ENCODE measurements at regions of chr22 and their contacts with region 1.

Region 1: DNA sequence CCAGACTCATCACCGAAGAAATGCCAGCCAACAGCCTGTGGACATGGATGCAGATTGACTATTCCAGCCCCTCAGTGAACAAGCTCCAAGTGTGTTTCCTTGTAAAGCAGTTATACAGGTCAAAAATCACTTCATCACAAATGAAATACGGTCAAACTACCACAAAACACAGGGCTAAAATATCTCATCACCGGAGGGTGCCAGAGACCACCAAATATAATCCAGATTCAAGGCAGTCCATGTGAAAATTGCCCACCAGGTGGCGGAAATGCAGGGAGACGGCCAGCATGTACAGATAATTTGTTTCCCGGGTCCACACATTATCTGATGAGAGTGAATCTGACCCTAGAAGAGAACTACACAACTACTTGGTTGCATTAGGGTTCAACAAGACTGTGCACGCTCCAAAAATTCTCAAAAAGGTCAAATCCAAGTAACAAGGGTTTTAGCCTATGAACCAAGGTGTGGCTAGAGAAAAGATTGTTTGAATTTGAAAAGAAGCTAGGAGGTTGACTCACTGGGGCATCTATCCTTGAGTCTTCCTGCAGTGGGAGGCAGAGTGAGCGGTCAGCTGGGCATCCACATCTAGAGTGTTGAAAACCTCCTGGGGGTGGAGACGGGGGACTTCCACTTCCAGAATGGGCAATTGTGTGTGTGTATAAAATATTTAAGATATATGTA is 71.7 kb downstream of the IGLL5 start:
- DNase-seq: peak in 1 of 2 experiments; percentile 87
- H3K4me3 ChIP-seq: no peak overlapping the region
- H3K27ac ChIP-seq: no peak overlapping the region
- H3K4me1 ChIP-seq: 0 out of 7 replicates have a peak, but pooled peaks cover 0 to 4% (median under 1%) of the 10 kb centered on the region in 4 experiments
- H3K27me3 ChIP-seq: peaks cover 0 to 13% (median 2%) of the 10 kb centered on the region in 4 experiments; a peak in 2 of 7 replicates
- CTCF ChIP-seq: peak; percentile 68 to 100 (median 94)
- EP300 ChIP-seq: no peak
- POLR2A ChIP-seq: no peak
- RAD21 ChIP-seq: peak; percentile 99 to 100

Region 2: GRCh38 chr22:22463855-22464540 is 495.3 kb before region 1 on chr22:
- CTCF ChIA-PET with region 1: interaction called, 206 read pairs
- POLR2A ChIA-PET with region 1: no interaction called
- DNase-seq: peak in 1 of 2 experiments; percentile 79
- H3K4me3 ChIP-seq: peak overlapping the region in 1 of 4 experiments; percentile 37; a peak in 1 of 8 replicates
- H3K27ac ChIP-seq: no peak overlapping the region
- H3K4me1 ChIP-seq: peaks cover 0 to 18% (median 3%) of the 10 kb centered on the region in 4 experiments; a peak in 3 of 7 replicates
- H3K27me3 ChIP-seq: peaks cover 3 to 26% (median 18%) of the 10 kb centered on the region in 4 experiments; a peak in 5 of 7 replicates
- CTCF ChIP-seq: peak; percentile 15 to 85 (median 66)
- EP300 ChIP-seq: no peak
- POLR2A ChIP-seq: no peak
- RAD21 ChIP-seq: peak; percentile 91

Region 3: GRCh38 chr22:22907551-22908494 is 51.5 kb before region 1 on chr22:
- CTCF ChIA-PET with region 1: no interaction called
- POLR2A ChIA-PET with region 1: no interaction called
- DNase-seq: no peak
- H3K4me3 ChIP-seq: no peak overlapping the region
- H3K27ac ChIP-seq: no peak overlapping the region
- H3K4me1 ChIP-seq: no peaks in the 10 kb centered on the region
- H3K27me3 ChIP-seq: peaks cover 11 to 40% (median 24%) of the 10 kb centered on the region in 4 experiments; a peak in 5 of 7 replicates
- CTCF ChIP-seq: no peak
- EP300 ChIP-seq: no peak
- POLR2A ChIP-seq: no peak
- RAD21 ChIP-seq: no peak

Region 4: GRCh38 chr22:22976033-22976922 is 17.0 kb after region 1 on chr22:
- CTCF ChIA-PET with region 1: interaction called, 24 read pairs
- POLR2A ChIA-PET with region 1: no interaction called
- DNase-seq: no peak
- H3K4me3 ChIP-seq: no peak overlapping the region
- H3K27ac ChIP-seq: no peak overlapping the region
- H3K4me1 ChIP-seq: no peaks in the 10 kb centered on the region
- H3K27me3 ChIP-seq: peaks cover 0 to 3% (median 2%) of the 10 kb centered on the region in 4 experiments; a peak in 4 of 7 replicates
- CTCF ChIP-seq: peak in 1 of 3 experiments; percentile 18; a peak in 1 of 4 replicates
- EP300 ChIP-seq: no peak
- POLR2A ChIP-seq: no peak
- RAD21 ChIP-seq: no peak

Region 5: DNA sequence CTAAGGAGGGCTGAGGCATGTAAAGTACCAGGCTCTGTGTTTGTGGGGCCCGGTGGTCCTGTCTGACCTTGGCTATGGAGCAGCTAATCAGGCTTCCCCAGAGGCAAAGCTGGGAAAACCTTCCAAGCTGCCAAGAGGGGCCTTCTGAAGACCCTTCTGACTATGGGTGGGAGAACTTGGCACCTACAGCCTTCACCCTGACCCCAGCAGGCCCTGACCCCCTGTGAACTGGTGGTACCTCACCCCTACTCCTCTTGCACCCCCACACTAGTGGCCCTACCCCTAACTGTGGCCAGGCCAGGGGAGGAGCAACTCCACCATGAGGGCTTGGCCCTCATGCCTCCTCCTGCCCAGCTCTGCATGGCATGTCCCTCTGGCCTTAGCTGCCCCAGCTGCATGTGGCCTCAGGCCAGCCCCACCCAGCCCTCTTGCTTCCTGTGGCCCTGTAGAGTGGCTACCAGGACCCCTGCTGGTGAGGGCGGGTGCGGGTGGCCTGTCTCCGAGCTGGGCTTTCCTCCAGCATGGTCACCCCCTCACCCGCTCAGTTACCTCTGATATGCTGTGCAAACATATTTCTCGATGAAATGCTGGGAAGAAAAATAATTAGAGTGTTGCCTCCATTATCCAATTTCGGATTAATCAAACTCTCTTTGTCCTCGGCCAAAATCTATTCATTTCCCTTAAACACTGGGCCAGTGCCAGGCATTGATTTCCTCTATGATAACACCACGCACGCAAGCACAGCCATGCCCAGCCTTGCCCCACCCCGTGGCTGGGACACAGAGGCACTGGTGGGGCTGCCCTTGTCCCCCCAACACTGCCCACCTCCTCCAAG is 118.6 kb after region 1 on chr22:
- CTCF ChIA-PET with region 1: no interaction called
- POLR2A ChIA-PET with region 1: no interaction called
- DNase-seq: no peak
- H3K4me3 ChIP-seq: no peak overlapping the region
- H3K27ac ChIP-seq: no peak overlapping the region
- H3K4me1 ChIP-seq: no peaks in the 10 kb centered on the region; a peak in 1 of 7 replicates
- H3K27me3 ChIP-seq: peaks cover 0 to 2% (median 0%) of the 10 kb centered on the region in 4 experiments; a peak in 3 of 7 replicates
- CTCF ChIP-seq: no peak
- EP300 ChIP-seq: no peak
- POLR2A ChIP-seq: no peak
- RAD21 ChIP-seq: no peak

Region 6: GRCh38 chr22:23113067-23113846 is 154.0 kb after region 1 on chr22:
- CTCF ChIA-PET with region 1: interaction called, 384 read pairs
- POLR2A ChIA-PET with region 1: no interaction called
- DNase-seq: no peak
- H3K4me3 ChIP-seq: no peak overlapping the region
- H3K27ac ChIP-seq: no peak overlapping the region
- H3K4me1 ChIP-seq: peaks cover 0 to 10% (median 4%) of the 10 kb centered on the region in 4 experiments; a peak in 3 of 7 replicates
- H3K27me3 ChIP-seq: peaks cover 0 to 3% (median 0%) of the 10 kb centered on the region in 4 experiments; a peak in 3 of 7 replicates
- CTCF ChIP-seq: no peak
- EP300 ChIP-seq: no peak
- POLR2A ChIP-seq: no peak
- RAD21 ChIP-seq: no peak

Region 7: GRCh38 chr22:23137905-23138561 is 178.7 kb after region 1 on chr22:
- CTCF ChIA-PET with region 1: interaction called, 384 read pairs
- POLR2A ChIA-PET with region 1: no interaction called
- DNase-seq: no peak
- H3K4me3 ChIP-seq: no peak overlapping the region
- H3K27ac ChIP-seq: no peak overlapping the region
- H3K4me1 ChIP-seq: peaks cover 2 to 6% (median 3%) of the 10 kb centered on the region in 4 experiments; a peak in 4 of 7 replicates
- H3K27me3 ChIP-seq: no peaks in the 10 kb centered on the region
- CTCF ChIP-seq: no peak
- EP300 ChIP-seq: no peak
- POLR2A ChIP-seq: no peak
- RAD21 ChIP-seq: no peak

Measured in H1 (cell line).